Mammary epithelial cell (primary cell): ENCODE measurements at regions of chr16 and their contacts with region 1.

Region 1: DNA sequence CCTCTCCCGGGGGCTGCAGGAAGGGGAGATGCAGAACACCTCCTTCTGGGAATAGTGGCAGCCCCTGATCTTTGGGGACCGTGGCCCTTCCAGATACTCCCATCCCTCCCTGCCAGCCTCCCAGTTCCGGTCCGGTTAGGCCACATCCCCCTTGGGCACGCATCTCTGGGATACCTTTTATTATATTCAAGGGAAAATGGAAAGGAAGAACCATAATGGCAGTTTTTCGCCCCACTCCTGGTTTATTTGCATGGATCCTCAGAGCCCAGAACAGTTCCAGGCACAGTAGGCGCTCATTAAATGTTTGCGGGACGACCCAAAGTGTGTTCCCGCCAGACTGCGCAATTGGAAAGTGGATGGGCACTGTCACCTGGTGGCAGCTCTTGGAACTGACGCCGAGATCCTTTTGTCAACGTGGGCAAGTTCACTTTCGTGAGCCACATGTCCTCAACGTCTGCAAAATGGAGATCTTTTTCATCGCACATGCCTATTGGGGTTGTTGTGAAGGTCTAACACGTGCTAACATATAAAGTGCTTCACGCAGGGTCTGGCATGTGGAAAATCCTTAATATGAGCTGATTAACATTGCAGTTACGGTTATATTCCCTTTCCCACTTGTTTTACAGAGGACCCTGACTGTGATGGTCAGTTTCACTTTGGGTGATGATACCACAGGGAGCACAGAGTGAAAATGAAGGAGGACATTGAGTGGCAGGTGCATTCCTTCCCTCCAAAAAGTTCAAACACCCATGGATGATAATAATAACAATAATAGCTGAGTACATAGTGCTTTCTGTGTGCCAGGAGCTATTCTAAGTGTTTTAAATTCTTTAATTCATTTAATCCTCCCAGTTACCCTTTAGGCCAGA is 1.7 kb upstream of the GPRC5B start:
- DNase-seq: peak; percentile 53
- H3K4me3 ChIP-seq: no peak overlapping the region
- H3K27ac ChIP-seq: no peak overlapping the region
- H3K4me1 ChIP-seq: peaks cover 10% of the 10 kb centered on the region
- H3K27me3 ChIP-seq: peaks cover 9% of the 10 kb centered on the region
- CTCF ChIP-seq: peak; percentile 100

Region 2: GRCh38 chr16:19086322-19087199 is 799.7 kb before region 1 on chr16:
- CTCF ChIA-PET with region 1: no interaction called
- dilution Hi-C with region 1: no loop called
- in situ Hi-C with region 1: no loop called
- intact Hi-C with region 1: loop called (anchors 5 kb)
- DNase-seq: peak; percentile 74
- H3K4me3 ChIP-seq: peak overlapping the region; percentile 28 to 48 (median 34)
- H3K27ac ChIP-seq: no peak overlapping the region
- H3K4me1 ChIP-seq: peaks cover 12% of the 10 kb centered on the region
- H3K27me3 ChIP-seq: no peaks in the 10 kb centered on the region
- CTCF ChIP-seq: peak; percentile 73 to 99

Region 3: DNA sequence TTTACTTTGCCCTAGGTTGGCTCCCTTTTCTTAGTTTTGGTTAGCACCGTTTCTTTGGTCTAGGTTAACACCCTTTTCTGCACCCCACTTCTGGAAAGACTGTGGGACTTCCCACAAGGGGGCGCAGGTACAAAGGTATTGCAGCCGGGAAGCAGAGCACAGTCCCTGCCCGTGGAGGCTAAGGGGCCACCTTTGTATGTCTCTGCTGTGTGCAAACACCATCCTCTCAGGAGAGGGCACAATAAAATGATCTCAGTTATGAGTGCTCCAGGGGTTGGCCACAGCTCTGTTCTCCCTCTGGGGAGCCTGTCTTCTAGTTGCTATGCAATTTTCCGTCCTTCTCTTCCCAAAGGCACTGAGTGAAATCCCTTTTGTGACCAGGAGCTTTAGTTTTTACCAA is 497.1 kb before region 1 on chr16:
- CTCF ChIA-PET with region 1: no interaction called
- dilution Hi-C with region 1: no loop called
- in situ Hi-C with region 1: no loop called
- intact Hi-C with region 1: loop called (anchors 2 kb)
- DNase-seq: peak; percentile 44
- H3K4me3 ChIP-seq: no peak overlapping the region
- H3K27ac ChIP-seq: no peak overlapping the region
- H3K4me1 ChIP-seq: peaks cover 20% of the 10 kb centered on the region
- H3K27me3 ChIP-seq: no peaks in the 10 kb centered on the region
- CTCF ChIP-seq: peak; percentile 63 to 90

Region 4: DNA sequence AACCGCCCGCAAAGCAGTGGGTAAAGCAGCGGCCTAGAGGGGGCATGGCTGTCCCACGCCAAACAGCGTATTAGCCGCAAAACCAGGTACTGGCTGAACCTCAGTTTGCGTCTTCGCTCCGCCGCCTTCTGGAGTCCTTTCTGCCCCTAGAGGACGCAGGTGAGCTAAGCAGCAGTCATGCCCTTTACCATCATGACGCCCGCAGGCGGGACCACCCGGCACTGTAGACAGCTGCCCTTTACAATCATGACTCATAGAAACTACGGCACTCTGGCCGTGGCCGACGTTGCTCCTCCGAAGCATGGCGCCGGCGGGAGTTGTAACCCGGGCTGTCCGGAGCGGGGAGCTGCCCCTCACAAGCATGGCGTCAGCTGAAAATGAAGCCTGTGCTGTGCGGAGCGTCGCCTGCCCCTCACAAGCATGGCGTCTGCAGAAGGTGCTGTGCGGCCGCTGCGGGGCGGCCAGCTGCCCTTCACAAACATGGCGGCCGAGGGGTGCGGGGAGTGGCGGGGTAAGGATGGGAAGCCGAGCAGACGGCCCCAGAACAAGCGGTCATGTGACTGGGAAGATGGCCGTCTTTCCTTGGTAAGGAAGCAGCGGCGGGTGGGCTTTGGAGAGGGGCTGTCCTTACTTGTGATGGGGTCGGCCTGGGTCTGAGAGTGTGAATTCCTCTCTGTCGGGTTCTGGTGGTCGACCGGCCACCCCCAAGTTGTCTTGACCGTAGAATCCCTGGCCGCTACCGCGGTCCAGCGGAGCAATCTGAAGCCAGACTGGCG is 331.0 kb before region 1 on chr16 and contains the start of gene VPS35L:
- CTCF ChIA-PET with region 1: no interaction called
- dilution Hi-C with region 1: no loop called
- in situ Hi-C with region 1: no loop called
- intact Hi-C with region 1: loop called (anchors 1 kb)
- DNase-seq: peak; percentile 98
- H3K4me3 ChIP-seq: peak within 1 kb of the TSS; percentile 53 to 92 (median 70)
- H3K27ac ChIP-seq: peak within 1 kb of the TSS; percentile 65
- H3K4me1 ChIP-seq: no peaks in the 10 kb centered on the region
- H3K27me3 ChIP-seq: no peaks in the 10 kb centered on the region
- CTCF ChIP-seq: peak; percentile 74 to 78
- total RNA-seq, gene VPS35L: 35.2 to 63.1 TPM

Region 5: DNA sequence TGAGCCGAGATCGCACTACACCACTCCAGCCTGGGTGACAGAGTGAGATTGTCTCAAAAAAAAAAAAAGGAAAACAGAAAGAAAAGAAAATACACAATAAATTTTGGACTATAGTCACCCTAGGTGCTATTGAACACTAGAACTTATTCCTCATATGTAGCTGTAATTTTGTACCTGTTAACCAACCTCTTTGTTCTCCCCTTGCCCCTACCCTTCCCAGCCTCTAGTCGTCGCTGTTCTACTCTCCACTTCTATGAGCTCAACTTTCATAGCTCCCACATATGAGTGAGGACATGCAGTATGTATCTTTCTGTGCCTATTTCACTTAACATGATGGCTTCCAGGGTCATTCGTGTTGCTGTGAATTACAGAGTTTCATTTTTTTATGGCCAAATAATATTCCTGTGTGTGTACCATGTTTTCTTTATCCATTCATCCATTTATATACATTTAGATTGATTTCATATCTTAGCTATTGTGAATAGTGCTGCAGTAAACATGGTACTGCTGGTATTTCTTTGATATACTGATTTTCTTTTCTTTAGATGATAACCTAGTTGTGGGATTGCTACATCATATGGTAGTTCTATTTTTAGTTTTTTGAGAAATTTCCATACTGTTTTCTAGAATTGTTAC is 302.5 kb before region 1 on chr16:
- CTCF ChIA-PET with region 1: interaction called, 6 read pairs
- dilution Hi-C with region 1: no loop called
- in situ Hi-C with region 1: no loop called
- intact Hi-C with region 1: loop called (anchors 1 kb)
- DNase-seq: peak; percentile 43
- H3K4me3 ChIP-seq: no peak overlapping the region
- H3K27ac ChIP-seq: no peak overlapping the region
- H3K4me1 ChIP-seq: no peaks in the 10 kb centered on the region
- H3K27me3 ChIP-seq: no peaks in the 10 kb centered on the region
- CTCF ChIP-seq: peak; percentile 91 to 93

Region 6: DNA sequence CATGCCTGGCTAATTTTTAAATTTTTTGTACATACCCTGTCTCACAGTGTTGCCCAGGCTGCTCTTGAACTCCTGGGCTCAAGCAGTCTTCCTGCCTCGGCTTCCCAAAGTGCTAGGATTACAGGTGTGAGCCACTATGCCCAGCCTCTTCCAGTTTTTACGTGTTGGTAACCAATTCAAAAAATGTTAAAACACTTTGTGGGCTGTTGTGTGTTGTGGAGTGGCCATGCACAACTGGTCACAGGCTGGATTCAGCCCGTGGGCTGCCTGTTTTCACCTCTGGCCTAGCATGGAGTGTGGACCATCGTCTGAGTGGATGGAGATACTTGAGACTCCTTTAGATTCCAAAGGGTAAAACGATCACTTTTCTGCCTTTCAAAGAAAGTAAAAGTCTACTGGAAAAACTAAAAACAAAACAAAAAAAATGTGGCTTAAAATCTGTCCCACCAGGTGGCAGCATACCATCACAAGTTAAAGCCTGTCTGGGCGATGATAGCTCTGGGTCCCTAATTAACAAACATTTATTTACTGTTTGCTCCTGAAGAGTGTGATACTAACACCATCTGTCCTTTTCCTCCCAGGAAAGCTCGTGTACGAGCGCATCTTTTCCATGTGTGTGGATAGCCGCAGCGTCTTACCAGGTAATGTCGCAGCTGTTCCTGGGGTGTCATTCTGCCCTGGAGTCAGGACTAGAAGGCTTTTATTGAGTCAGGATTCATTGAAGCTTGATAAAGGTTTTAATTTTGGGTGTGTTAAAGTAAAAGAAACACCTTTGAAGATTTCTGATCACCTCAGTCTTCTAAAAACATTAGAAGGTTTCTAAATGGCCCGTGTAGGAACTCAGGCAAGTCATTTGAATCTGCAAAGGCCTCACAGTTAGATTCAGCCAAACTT is 285.0 kb before region 1 on chr16:
- CTCF ChIA-PET with region 1: no interaction called
- dilution Hi-C with region 1: loop called (anchors 25 kb)
- in situ Hi-C with region 1: loop called (anchors 5 to 10 kb)
- intact Hi-C with region 1: loop called (anchors 1 kb)
- DNase-seq: no peak
- H3K4me3 ChIP-seq: no peak overlapping the region
- H3K27ac ChIP-seq: no peak overlapping the region
- H3K4me1 ChIP-seq: no peaks in the 10 kb centered on the region
- H3K27me3 ChIP-seq: no peaks in the 10 kb centered on the region
- CTCF ChIP-seq: peak; percentile 59 to 63

Region 7: DNA sequence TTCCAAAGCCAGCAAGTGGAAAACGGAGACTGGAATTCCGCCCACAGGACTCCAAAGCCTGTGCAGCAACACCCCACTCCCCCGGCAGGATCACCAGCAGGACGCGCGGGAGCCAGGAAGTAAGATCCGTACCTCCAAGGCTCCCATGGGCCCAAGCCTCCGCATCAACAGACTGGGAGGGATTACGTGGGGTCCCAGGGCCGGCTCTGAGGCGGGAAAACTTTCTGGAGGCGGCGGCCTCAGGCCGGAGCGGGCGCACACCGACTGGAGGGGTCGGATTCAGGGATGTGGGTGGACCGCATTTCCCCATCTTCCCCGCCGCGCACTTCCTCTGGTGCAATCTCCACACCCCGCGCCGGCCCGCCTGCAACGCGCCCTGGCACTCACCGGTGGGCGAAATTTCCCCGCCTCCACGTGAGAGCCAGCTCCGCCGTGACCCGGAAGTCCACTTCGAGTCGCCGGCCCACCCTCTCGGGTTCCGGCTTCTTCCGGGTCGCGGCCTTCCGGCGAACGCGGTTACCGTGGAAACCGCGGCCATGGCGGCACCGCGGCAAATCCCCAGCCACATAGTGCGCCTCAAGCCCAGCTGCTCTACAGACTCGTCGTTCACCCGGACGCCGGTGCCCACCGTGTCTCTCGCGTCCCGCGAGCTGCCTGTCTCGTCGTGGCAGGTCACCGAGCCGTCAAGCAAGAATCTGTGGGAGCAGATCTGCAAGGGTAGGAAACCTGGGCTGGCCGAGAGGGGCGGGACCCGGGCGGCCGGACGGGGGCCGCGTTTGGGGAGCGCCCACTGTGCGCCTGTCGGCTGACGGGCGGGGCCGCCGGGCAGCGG is 168.3 kb before region 1 on chr16 and contains the starts of genes IQCK and KNOP1:
- CTCF ChIA-PET with region 1: no interaction called
- dilution Hi-C with region 1: loop called (anchors 25 kb)
- in situ Hi-C with region 1: loop called in 1 of 2 experiments (anchors 5 kb)
- intact Hi-C with region 1: loop called (anchors 2 kb)
- DNase-seq: peak; percentile 86
- H3K4me3 ChIP-seq: peak within 1 kb of the TSS; percentile 67 to 100 (median 82)
- H3K27ac ChIP-seq: peak within 1 kb of the TSS; percentile 74
- H3K4me1 ChIP-seq: peaks cover 26% of the 10 kb centered on the region
- H3K27me3 ChIP-seq: no peaks in the 10 kb centered on the region
- CTCF ChIP-seq: no peak
- total RNA-seq, gene IQCK: 5.8 to 11.0 TPM
- total RNA-seq, gene KNOP1: 7.8 to 31.3 TPM

Region 8: DNA sequence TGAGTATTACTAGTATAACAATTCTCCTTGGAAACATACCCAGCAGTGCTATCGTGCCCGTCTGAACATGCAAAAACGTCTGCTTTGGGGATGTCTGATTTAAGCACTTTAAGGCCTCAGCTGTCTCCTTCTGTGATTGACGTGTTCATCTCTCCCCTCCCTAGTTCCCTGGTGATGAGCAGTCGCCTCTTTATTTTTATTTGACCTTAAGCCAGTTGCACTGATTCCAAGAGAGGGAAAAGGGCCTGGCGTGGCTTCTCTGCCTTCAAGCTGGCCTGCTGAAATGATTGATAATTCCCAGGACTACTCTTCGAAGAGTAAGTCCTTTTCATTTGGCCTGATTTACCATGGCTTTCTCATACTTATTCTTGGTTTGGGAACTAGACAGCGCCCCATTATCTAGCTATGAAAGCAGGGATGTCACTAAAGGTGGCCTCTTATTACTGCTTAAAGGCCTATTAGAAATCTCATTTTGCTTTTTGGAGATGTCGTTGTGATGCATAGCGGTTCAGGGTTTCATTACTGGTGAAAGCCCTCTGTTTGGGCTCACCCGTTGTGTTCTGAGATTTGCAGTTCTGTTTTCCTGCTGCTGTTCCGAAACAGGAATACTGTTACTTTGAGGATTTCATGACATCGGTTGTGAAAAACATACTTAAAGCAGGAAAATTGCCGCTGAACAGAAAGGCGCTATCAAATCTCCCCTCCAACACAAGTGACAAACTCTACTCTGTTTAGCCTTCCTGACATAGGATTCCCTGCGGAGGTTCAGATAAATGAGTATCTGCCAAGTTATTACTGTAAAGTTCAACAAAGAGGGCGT is 102.7 kb before region 1 on chr16:
- CTCF ChIA-PET with region 1: no interaction called
- dilution Hi-C with region 1: no loop called
- in situ Hi-C with region 1: no loop called
- intact Hi-C with region 1: no loop called
- DNase-seq: no peak
- H3K4me3 ChIP-seq: no peak overlapping the region
- H3K27ac ChIP-seq: no peak overlapping the region
- H3K4me1 ChIP-seq: no peaks in the 10 kb centered on the region
- H3K27me3 ChIP-seq: no peaks in the 10 kb centered on the region
- CTCF ChIP-seq: no peak

Region 9: DNA sequence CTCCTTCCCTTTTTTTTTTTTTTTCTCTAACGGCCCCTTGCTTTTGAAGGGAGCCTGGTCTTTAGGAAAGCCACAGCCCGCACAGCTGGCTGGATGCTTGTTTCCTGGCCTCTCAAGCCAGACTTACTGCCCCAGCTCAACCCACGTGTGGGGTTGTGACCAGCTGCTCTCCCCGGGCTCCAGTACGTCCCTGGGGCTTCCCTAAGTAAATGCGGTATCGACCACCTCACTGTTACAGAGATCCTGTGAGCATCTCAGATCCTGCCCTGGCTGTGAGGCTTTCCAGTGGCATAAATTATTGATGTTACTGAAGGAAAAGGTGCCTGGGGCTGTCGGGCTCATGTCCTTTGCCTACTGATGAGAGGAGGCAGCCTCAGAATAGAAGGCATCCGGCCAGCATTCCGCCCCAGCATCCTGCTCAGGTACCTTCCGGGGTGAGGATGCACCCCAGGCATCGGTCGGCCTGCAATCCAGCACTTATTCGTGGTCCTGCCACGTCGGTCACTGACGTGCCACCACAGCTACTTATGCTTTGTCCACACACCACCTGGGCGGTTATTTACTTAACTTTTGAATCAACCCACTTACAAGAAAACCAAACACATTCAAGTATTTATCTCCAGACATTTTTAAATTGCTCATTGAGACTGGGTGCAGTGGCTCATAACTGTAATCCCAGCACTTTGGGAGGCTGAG is 11.3 kb before region 1 on chr16:
- CTCF ChIA-PET with region 1: no interaction called
- dilution Hi-C with region 1: no loop called
- in situ Hi-C with region 1: no loop called
- intact Hi-C with region 1: no loop called
- DNase-seq: no peak
- H3K4me3 ChIP-seq: no peak overlapping the region
- H3K27ac ChIP-seq: no peak overlapping the region
- H3K4me1 ChIP-seq: peaks cover 11% of the 10 kb centered on the region
- H3K27me3 ChIP-seq: no peaks in the 10 kb centered on the region
- CTCF ChIP-seq: no peak